GM18951 (cell line): ENCODE measurements at regions of chr3 and their contacts with region 1.

Region 1: DNA sequence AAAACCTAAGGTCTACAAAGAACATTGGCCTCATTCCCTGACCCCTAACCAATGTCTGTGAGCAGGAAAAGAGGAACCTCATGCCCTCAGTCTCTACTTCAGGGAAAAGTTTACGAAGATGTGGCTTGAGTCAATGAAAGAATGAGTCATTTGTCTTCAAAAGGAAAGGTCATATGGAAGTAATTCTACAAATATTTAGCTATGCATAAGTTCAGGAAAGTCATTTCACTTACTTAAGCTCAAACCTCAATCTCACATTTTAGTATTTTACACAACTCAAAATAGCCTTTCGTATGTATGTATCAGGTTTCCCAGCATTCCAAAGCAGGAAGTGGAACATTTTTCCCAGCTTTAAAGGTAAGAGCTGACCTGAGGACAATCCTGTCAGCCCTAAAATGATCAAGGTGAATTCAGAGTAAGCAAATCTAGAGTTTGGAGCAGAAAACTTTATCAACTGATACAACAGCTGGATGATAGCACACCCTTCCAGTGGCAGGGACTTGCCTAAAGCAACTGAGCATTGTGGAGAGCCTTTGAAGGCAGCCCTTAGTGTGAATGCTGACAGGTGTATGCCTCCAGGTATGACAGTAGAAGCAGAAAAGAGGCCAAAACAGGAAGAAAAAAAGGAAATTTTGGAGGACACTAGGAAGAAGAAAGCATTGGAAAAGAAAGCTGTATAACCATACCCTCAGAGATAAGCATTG is 53.9 kb upstream of the ACKR4 start:
- POLR2A ChIP-seq: no peak

Region 2: GRCh38 chr3:132641837-132642538 is 98.8 kb after region 1 on chr3:
- in situ Hi-C with region 1: loop called (anchors 5 kb)
- POLR2A ChIP-seq: no peak

Region 3: GRCh38 chr3:133833880-133834620 is 1290.9 kb after region 1 on chr3:
- in situ Hi-C with region 1: no loop called
- POLR2A ChIP-seq: no peak